Activated CD8-positive, alpha-beta T cell treated with anti-CD3 and anti-CD28 coated beads, Interleukin-2, amount 10 ng/mL, durations not matched to agents 7 days and 5 days (primary cell): ENCODE measurements at regions of chr20 and their contacts with region 1.

Region 1: GRCh38 chr20:62808211-62808865 is 3.7 kb downstream of the OGFR start:
- DNase-seq: peak; percentile 80
- ATAC-seq: peak; percentile 50
- H3K4me3 Mint-ChIP-seq: peak overlapping the region; percentile 29
- H3K27ac Mint-ChIP-seq: no peak overlapping the region
- H3K4me1 Mint-ChIP-seq: peaks cover 31% of the 10 kb centered on the region
- H3K27me3 Mint-ChIP-seq: no peaks in the 10 kb centered on the region

Region 2: GRCh38 chr20:62500237-62500864 is 308.0 kb before region 1 on chr20:
- CTCF ChIA-PET with region 1: interaction called, 11 read pairs
- POLR2A ChIA-PET with region 1: no interaction called
- DNase-seq: peak; percentile 85
- ATAC-seq: peak; percentile 73
- H3K4me3 Mint-ChIP-seq: no peak overlapping the region
- H3K27ac Mint-ChIP-seq: peak overlapping the region; percentile 43
- H3K4me1 Mint-ChIP-seq: peaks cover 25% of the 10 kb centered on the region
- H3K27me3 Mint-ChIP-seq: no peaks in the 10 kb centered on the region

Region 3: GRCh38 chr20:62787866-62788265 is 20.5 kb before region 1 on chr20:
- CTCF ChIA-PET with region 1: interaction called, 10 read pairs
- POLR2A ChIA-PET with region 1: interaction called, 5 read pairs
- DNase-seq: no peak
- ATAC-seq: no peak
- H3K4me3 Mint-ChIP-seq: no peak overlapping the region
- H3K27ac Mint-ChIP-seq: no peak overlapping the region
- H3K4me1 Mint-ChIP-seq: peaks cover 23% of the 10 kb centered on the region
- H3K27me3 Mint-ChIP-seq: no peaks in the 10 kb centered on the region

Region 4: GRCh38 chr20:62861726-62862336 is 53.5 kb after region 1 on chr20 and contains the start of gene TCFL5:
- CTCF ChIA-PET with region 1: interaction called, 10 read pairs
- POLR2A ChIA-PET with region 1: no interaction called
- DNase-seq: peak; percentile 92
- ATAC-seq: peak; percentile 88
- H3K4me3 Mint-ChIP-seq: peak within 1 kb of the TSS; percentile 64
- H3K27ac Mint-ChIP-seq: no peak within 1 kb of the TSS
- H3K4me1 Mint-ChIP-seq: peaks cover 23% of the 10 kb centered on the region
- H3K27me3 Mint-ChIP-seq: peaks cover 4% of the 10 kb centered on the region
- total RNA-seq, gene TCFL5: 7.9 to 9.6 TPM